Transverse colon (tissue), 4 donors: ENCODE measurements at regions of chr3 and their contacts with region 1.

Region 1: GRCh38 chr3:30779686-30780287 is 114.7 kb downstream of the GADL1 start:
- DNase-seq: no peak
- H3K4me3 ChIP-seq: no peak overlapping the region
- H3K27ac ChIP-seq: no peak overlapping the region
- H3K4me1 ChIP-seq: no peaks in the 10 kb centered on the region
- H3K27me3 ChIP-seq: no peaks in the 10 kb centered on the region
- CTCF ChIP-seq: peak in 4 of 5 experiments; percentile 26 to 39 (median 30)
- EP300 ChIP-seq: no peak
- POLR2A ChIP-seq: no peak

Region 2: GRCh38 chr3:30751610-30752299 is 28.0 kb before region 1 on chr3:
- in situ Hi-C with region 1: no loop called
- intact Hi-C with region 1: no loop called
- DNase-seq: peak; percentile 22
- H3K4me3 ChIP-seq: no peak overlapping the region
- H3K27ac ChIP-seq: no peak overlapping the region
- H3K4me1 ChIP-seq: peaks cover 4 to 34% (median 13%) of the 10 kb centered on the region in 4 donors
- H3K27me3 ChIP-seq: no peaks in the 10 kb centered on the region
- CTCF ChIP-seq: peak in 2 of 5 experiments; percentile 8 to 19
- EP300 ChIP-seq: no peak
- POLR2A ChIP-seq: no peak

Region 3: DNA sequence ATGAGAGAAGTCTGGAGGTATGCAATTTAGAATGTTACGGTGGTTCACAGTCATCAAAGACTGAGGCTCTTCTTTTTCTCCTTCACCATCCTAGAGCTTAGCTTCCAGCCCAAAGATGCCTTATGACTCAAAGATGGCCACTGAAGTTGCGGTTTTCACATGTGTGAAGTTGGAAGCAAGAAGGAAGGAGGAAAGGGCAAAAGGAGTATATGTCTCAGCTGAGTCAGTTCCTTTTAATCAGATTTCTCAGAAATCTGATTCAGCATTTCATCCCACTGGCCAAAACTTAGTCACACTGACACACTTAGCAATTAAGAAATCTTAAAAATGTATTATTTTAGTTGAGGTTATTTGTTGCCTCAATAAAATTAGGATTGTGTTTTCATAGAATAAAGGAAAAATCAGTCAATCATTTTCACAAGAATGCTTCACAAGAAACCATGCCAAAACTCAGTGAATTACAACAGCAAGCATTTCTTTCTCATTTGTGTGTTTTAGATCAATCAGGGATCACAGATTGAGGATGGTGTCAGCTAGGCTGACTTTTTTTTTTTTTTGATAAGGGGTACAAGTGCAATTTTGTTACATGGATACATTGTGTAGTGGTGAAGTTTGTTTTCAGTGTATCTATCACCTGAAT is 325.8 kb after region 1 on chr3:
- in situ Hi-C with region 1: loop called in 1 of 4 experiments (anchors 25 kb)
- intact Hi-C with region 1: no loop called
- DNase-seq: no peak
- H3K4me3 ChIP-seq: no peak overlapping the region
- H3K27ac ChIP-seq: no peak overlapping the region
- H3K4me1 ChIP-seq: no peaks in the 10 kb centered on the region
- H3K27me3 ChIP-seq: no peaks in the 10 kb centered on the region
- CTCF ChIP-seq: no peak
- EP300 ChIP-seq: no peak
- POLR2A ChIP-seq: no peak